IMR-90 (cell line): ENCODE measurements at regions of chr19 and their contacts with region 1.

Region 1: DNA sequence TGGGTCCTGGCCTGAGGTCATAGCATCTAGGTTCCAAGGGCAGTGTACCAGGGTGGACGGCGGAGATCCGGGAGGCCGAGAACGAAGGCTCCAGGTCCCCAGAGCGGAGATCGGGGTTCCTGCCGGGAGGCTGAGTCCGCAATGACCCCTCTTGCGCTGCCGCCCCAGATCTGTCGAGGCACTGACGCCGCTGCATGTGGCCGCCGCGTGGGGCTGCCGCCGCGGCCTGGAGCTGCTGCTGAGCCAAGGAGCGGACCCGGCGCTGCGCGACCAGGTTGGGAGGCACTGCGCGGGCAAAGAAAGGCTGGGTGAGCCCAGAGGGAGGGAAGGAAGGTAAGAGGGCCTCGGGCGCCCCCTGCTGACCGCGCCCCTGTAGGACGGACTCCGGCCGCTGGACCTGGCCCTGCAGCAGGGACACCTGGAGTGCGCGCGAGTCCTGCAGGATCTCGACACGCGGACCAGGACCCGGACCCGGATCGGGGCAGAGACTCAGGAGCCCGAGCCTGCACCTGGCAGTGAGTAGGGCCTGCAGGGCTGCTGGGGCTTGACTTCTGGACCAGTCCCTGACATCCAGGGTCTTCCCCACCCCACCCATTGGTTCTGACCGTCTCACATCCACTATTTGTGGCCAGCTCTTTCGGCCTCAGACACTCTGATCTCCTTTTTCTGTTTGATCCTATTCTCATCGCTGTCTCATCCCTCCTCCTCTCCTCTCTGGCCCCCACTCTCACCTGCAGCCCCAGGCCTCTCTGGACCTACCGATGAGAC is 971 bp downstream of the ANKLE1 start:
- DNase-seq: peak; percentile 62
- ATAC-seq: peak; percentile 96
- H3K4me3 ChIP-seq: peak overlapping the region; percentile 32
- H3K27ac ChIP-seq: no peak overlapping the region
- H3K4me1 ChIP-seq: no peaks in the 10 kb centered on the region
- H3K27me3 ChIP-seq: no peaks in the 10 kb centered on the region
- CTCF ChIP-seq: peak; percentile 91
- POLR2A ChIP-seq: no peak
- RAD21 ChIP-seq: peak; percentile 89

Region 2: GRCh38 chr19:16897154-16897855 is 385.4 kb before region 1 on chr19:
- CTCF ChIA-PET with region 1: no interaction called
- POLR2A ChIA-PET with region 1: no interaction called
- dilution Hi-C with region 1: no loop called
- in situ Hi-C with region 1: no loop called
- intact Hi-C with region 1: loop called (anchors 2 kb)
- DNase-seq: peak; percentile 91
- ATAC-seq: peak; percentile 93
- H3K4me3 ChIP-seq: peak overlapping the region; percentile 87
- H3K27ac ChIP-seq: peak overlapping the region; percentile 54
- H3K4me1 ChIP-seq: no peaks in the 10 kb centered on the region
- H3K27me3 ChIP-seq: peaks cover 10% of the 10 kb centered on the region; the same call in 1 of the 2 replicates
- CTCF ChIP-seq: no peak
- POLR2A ChIP-seq: no peak
- RAD21 ChIP-seq: no peak

Region 3: DNA sequence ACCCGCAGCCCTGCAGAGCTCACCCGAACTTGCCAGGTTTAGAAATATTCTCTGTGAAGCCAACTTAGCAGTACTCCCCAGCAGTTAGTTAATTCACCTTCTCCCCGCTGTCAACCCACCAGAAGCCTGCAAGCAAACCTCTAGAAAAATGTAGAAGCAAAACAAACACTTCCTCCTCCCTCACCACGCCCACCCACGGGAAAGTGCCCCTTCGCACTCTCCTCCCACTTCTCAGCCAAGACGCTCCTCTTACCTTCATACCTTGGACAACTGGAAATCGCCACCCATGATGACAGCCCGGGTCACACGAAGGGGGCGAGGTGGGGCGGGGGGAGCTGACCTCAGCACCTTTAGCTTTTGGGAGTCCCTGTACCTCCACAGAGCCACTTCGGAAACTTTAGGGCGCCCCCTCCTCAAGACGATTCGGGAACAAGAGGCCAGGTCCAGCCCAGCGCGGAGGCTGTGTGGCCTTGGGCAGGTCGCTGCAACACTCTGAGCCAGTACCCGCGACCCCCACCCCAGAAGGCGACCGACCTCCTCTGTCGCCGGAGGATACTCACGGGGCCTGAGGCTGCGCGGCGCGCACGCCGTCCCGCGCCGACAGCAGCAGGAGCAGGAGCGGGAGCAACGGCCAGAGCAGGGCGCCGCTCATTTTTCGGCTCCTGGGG is 256.5 kb before region 1 on chr19:
- CTCF ChIA-PET with region 1: no interaction called
- POLR2A ChIA-PET with region 1: no interaction called
- dilution Hi-C with region 1: no loop called
- in situ Hi-C with region 1: no loop called
- intact Hi-C with region 1: no loop called
- DNase-seq: no peak
- ATAC-seq: no peak
- H3K4me3 ChIP-seq: no peak overlapping the region
- H3K27ac ChIP-seq: no peak overlapping the region
- H3K4me1 ChIP-seq: peaks cover 2% of the 10 kb centered on the region; the same call in 1 of the 2 replicates
- H3K27me3 ChIP-seq: peaks cover 48% of the 10 kb centered on the region
- CTCF ChIP-seq: no peak
- POLR2A ChIP-seq: no peak
- RAD21 ChIP-seq: no peak

Region 4: DNA sequence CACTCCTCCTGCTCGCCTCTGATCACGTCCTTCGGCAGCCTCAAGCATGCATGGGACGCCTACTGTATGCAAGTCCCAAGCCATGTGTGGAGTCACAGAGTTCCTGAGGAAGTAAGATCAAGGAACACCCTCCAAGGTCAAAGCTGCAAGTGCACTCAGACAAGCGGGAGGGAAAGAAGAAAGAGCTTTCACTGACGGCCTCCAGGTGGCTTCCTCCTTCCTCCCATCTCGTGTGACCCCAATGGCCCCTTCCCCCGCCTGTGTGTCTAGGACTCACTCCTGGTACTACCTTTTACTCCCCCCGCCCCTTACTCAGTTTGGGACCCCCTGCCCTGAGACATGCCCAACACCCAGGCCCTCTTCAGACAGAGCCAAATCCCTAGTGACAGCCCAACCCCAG is 213.5 kb before region 1 on chr19:
- CTCF ChIA-PET with region 1: no interaction called
- POLR2A ChIA-PET with region 1: no interaction called
- dilution Hi-C with region 1: no loop called
- in situ Hi-C with region 1: loop called (anchors 5 kb)
- intact Hi-C with region 1: loop called (anchors 1 kb)
- DNase-seq: no peak
- ATAC-seq: no peak
- H3K4me3 ChIP-seq: no peak overlapping the region
- H3K27ac ChIP-seq: no peak overlapping the region
- H3K4me1 ChIP-seq: peaks cover 5% of the 10 kb centered on the region
- H3K27me3 ChIP-seq: no peaks in the 10 kb centered on the region
- CTCF ChIP-seq: no peak
- POLR2A ChIP-seq: no peak
- RAD21 ChIP-seq: no peak

Region 5: DNA sequence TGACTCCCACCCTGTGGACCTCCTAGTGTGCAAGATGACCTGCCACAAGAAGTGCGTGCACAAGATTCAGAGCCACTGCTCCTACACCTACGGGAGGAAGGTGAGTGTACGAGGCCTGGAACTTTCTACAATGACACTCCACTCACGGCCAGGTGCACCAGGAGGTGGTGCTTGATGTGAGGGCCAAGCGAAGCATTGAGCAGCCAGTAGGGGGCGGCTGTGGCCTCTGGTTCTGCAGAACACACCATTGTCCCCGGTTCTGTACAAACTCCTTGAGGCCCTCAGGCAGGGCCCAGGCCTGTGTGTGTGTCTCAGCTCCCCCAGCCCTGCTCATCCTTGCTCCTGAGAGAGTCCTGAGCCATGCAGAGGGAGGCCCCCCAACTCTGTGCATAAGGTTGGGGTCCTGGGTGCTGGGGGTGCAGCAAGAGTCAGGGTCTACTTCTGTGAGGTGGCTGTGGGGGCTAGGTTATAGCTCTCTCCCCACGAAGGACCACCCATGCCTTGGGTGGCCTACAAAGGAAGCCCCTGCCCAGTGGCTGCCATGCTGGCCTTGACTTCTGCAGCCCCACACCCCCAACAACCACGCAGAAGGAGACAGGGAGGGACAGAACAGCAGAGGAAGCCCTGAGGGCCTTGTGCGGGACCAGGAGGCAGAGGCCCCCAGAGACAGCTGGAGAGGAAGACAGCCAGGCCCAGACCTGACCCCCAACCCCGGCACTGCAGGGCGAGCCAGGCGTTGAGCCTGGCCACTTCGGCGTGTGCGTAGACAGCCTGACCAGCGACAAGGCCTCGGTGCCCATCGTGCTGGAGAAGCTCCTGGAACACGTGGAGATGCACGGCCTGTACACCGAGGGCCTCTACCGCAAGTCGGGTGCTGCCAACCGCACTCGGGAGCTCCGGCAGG is 77.2 kb before region 1 on chr19:
- CTCF ChIA-PET with region 1: no interaction called
- POLR2A ChIA-PET with region 1: no interaction called
- dilution Hi-C with region 1: no loop called
- in situ Hi-C with region 1: loop called (anchors 10 kb)
- intact Hi-C with region 1: loop called (anchors 1 kb)
- DNase-seq: peak; percentile 34
- ATAC-seq: peak; percentile 59
- H3K4me3 ChIP-seq: no peak overlapping the region
- H3K27ac ChIP-seq: no peak overlapping the region
- H3K4me1 ChIP-seq: no peaks in the 10 kb centered on the region
- H3K27me3 ChIP-seq: no peaks in the 10 kb centered on the region
- CTCF ChIP-seq: peak; percentile 56
- POLR2A ChIP-seq: no peak
- RAD21 ChIP-seq: peak; percentile 54